ENCODE measurements at regions of chrX and their contacts with region 1.

Region 1: GRCh38 chrX:149286940-149287349 is 218.2 kb downstream of the IDS start:
- DNase-seq: peak; percentile 60
- H3K4me3 Mint-ChIP-seq: no peak overlapping the region
- H3K27ac Mint-ChIP-seq: no peak overlapping the region
- H3K4me1 Mint-ChIP-seq: peaks cover 11% of the 10 kb centered on the region
- H3K27me3 Mint-ChIP-seq: peaks cover 4% of the 10 kb centered on the region

Region 2: GRCh38 chrX:148049441-148049840 is 1237.5 kb before region 1 on chrX:
- CTCF ChIA-PET with region 1: interaction called, 9 read pairs
- POLR2A ChIA-PET with region 1: no interaction called
- intact Hi-C with region 1: loop called (anchors 1 kb)
- DNase-seq: no peak
- H3K4me3 Mint-ChIP-seq: no peak overlapping the region
- H3K27ac Mint-ChIP-seq: no peak overlapping the region
- H3K4me1 Mint-ChIP-seq: no peaks in the 10 kb centered on the region
- H3K27me3 Mint-ChIP-seq: no peaks in the 10 kb centered on the region

Region 3: DNA sequence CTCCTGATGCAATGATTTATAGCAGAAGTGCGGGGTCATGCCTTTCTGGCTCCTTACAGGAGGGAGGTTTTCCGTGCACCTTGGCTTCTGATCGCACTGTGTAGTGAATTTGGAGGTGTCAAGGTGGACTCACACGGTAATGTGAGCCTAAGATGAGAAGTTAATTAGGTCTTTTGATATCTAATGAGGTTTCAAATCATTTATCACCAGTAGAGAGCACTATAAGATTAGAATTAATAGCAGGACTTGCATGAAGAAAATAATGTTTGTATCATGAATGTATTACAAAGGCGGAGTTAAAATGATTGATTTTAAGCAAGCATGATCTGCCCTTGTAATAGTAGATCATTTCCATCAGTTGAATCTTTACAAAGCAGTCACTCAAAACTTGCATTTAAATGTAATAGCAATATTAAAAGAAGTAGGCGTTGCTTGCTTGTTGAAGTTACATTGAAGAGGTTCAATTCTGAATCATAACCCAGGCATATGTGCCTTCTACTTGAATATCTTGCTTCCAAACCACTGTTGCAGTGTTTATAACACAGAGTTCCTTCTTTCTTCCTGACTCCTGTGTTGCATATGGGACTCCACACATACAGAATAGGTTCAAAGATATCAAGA is 1153.7 kb before region 1 on chrX:
- CTCF ChIA-PET with region 1: interaction called, 7 read pairs
- POLR2A ChIA-PET with region 1: no interaction called
- intact Hi-C with region 1: loop called (anchors 5 kb)
- DNase-seq: no peak
- H3K4me3 Mint-ChIP-seq: no peak overlapping the region
- H3K27ac Mint-ChIP-seq: no peak overlapping the region
- H3K4me1 Mint-ChIP-seq: no peaks in the 10 kb centered on the region
- H3K27me3 Mint-ChIP-seq: no peaks in the 10 kb centered on the region

Region 4: GRCh38 chrX:149470955-149471354 is 184.0 kb after region 1 on chrX:
- CTCF ChIA-PET with region 1: interaction called, 7 read pairs
- POLR2A ChIA-PET with region 1: no interaction called
- intact Hi-C with region 1: loop called (anchors 10 kb)
- DNase-seq: peak; percentile 76
- H3K4me3 Mint-ChIP-seq: no peak overlapping the region
- H3K27ac Mint-ChIP-seq: no peak overlapping the region
- H3K4me1 Mint-ChIP-seq: no peaks in the 10 kb centered on the region
- H3K27me3 Mint-ChIP-seq: no peaks in the 10 kb centered on the region

Measured in activated CD4-positive, alpha-beta memory T cell treated with anti-CD3 and anti-CD28 coated beads for 36 hours (primary cell).